Naive thymus-derived CD4-positive, alpha-beta T cell (primary cell): ENCODE measurements at regions of chr10 and their contacts with region 1.

Region 1: DNA sequence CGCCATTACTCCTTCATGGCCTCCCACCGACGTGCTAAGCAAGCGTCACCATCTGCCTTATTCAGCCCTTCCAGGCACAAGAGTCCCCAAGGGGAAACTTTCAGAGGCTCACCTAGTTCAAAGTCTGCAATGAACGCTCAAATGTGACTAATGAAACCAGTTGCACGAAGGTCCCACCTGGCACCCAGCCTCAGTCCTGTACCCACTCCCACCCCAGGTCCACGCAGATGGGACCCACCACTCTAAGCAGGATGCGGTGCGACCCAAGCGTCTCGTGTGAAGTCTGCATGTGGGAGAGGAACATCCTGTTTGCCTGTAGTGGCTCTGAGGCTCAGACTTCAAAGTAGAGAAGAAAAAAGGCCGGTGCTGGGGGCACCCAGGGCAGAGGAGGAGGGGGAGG is 40.3 kb downstream of the RGS10 start:
- DNase-seq: peak; percentile 50 to 93 (median 91)
- ATAC-seq: peak; percentile 91
- H3K4me3 ChIP-seq: peak overlapping the region; percentile 46
- H3K4me3 Mint-ChIP-seq: peak overlapping the region; percentile 70 to 85 (median 82)
- H3K27ac ChIP-seq: peak overlapping the region; percentile 98
- H3K27ac Mint-ChIP-seq: peak overlapping the region; percentile 95 to 100 (median 99)
- H3K4me1 ChIP-seq: peaks cover 39 to 88% of the 10 kb centered on the region in 2 donors
- H3K4me1 Mint-ChIP-seq: peaks cover 56 to 98% (median 92%) of the 10 kb centered on the region in 7 donors
- H3K27me3 ChIP-seq: no peaks in the 10 kb centered on the region
- H3K27me3 Mint-ChIP-seq: no peaks in the 10 kb centered on the region

Region 2: DNA sequence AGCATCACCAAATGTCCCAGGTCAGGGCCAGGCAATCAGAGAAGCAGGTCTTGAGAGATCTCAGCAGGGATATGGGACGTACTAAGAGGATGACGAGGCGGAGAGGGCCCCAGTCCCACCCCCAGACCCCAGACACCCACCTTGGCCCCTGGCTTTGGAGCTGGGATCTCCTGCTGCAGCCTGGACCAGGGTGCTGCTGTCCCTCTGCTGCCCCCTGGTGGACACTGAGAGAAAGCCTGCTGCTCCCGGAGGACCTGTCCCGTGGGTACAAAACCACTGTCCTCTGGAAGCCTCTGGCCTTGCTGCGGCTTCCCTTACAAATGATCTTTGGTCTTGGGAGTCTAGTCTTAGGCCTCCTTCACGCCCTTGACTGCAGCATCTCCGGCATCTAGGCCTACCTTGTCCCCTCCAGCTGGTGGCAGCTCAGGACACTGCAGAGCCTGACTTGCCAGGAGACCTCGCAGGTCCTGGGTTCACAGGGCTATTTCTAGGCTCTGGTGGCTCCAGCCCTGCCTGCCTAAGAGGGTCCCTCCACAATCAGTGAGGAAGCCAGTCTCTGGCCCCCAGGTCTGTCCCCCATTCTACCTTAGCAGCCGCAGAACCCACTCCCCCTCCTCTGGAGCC is 56.8 kb before region 1 on chr10:
- CTCF ChIA-PET with region 1: interaction called, 8 read pairs
- POLR2A ChIA-PET with region 1: no interaction called
- intact Hi-C with region 1: loop called in 1 of 2 experiments (anchors 1 kb)
- DNase-seq: peak; percentile 64 to 89 (median 76)
- ATAC-seq: peak; percentile 85
- H3K4me3 ChIP-seq: no peak overlapping the region
- H3K4me3 Mint-ChIP-seq: peak overlapping the region in 1 of 10 donors; percentile 60
- H3K27ac ChIP-seq: no peak overlapping the region
- H3K27ac Mint-ChIP-seq: peak overlapping the region in 8 of 9 donors; percentile 6 to 81 (median 52)
- H3K4me1 ChIP-seq: no peaks in the 10 kb centered on the region
- H3K4me1 Mint-ChIP-seq: peaks cover 12 to 23% (median 17%) of the 10 kb centered on the region in 7 donors
- H3K27me3 ChIP-seq: no peaks in the 10 kb centered on the region
- H3K27me3 Mint-ChIP-seq: no peaks in the 10 kb centered on the region

Region 3: GRCh38 chr10:119478111-119478802 is 24.0 kb before region 1 on chr10:
- CTCF ChIA-PET with region 1: no interaction called
- POLR2A ChIA-PET with region 1: interaction called, 5 read pairs
- intact Hi-C with region 1: loop called in 1 of 2 experiments (anchors 1 kb)
- DNase-seq: peak in 2 of 9 donors; percentile 5 to 35
- ATAC-seq: peak; percentile 64
- H3K4me3 ChIP-seq: no peak overlapping the region
- H3K4me3 Mint-ChIP-seq: peak overlapping the region; percentile 66 to 81 (median 71)
- H3K27ac ChIP-seq: no peak overlapping the region
- H3K27ac Mint-ChIP-seq: peak overlapping the region; percentile 23 to 81 (median 71)
- H3K4me1 ChIP-seq: peaks cover 20 to 26% of the 10 kb centered on the region in 2 donors
- H3K4me1 Mint-ChIP-seq: peaks cover 25 to 44% (median 35%) of the 10 kb centered on the region in 7 donors
- H3K27me3 ChIP-seq: no peaks in the 10 kb centered on the region
- H3K27me3 Mint-ChIP-seq: peaks cover 0 to 6% (median 0%) of the 10 kb centered on the region in 5 donors

Region 4: GRCh38 chr10:119489991-119490326 is 12.2 kb before region 1 on chr10:
- CTCF ChIA-PET with region 1: interaction called, 9 read pairs
- POLR2A ChIA-PET with region 1: interaction called, 15 read pairs
- intact Hi-C with region 1: loop called in 1 of 2 experiments (anchors 1 kb)
- DNase-seq: no peak
- ATAC-seq: no peak
- H3K4me3 ChIP-seq: peak overlapping the region; percentile 55
- H3K4me3 Mint-ChIP-seq: peak overlapping the region; percentile 53 to 92 (median 84)
- H3K27ac ChIP-seq: peak overlapping the region; percentile 83
- H3K27ac Mint-ChIP-seq: peak overlapping the region; percentile 80 to 98 (median 92)
- H3K4me1 ChIP-seq: peaks cover 24 to 36% of the 10 kb centered on the region in 2 donors
- H3K4me1 Mint-ChIP-seq: peaks cover 19 to 66% (median 59%) of the 10 kb centered on the region in 7 donors
- H3K27me3 ChIP-seq: no peaks in the 10 kb centered on the region
- H3K27me3 Mint-ChIP-seq: no peaks in the 10 kb centered on the region

Region 5: GRCh38 chr10:119536508-119537025 is 34.4 kb after region 1 on chr10:
- CTCF ChIA-PET with region 1: interaction called, 28 read pairs
- POLR2A ChIA-PET with region 1: interaction called, 169 read pairs
- intact Hi-C with region 1: loop called in 1 of 2 experiments (anchors 1 kb)
- DNase-seq: no peak
- ATAC-seq: no peak
- H3K4me3 ChIP-seq: peak overlapping the region; percentile 16
- H3K4me3 Mint-ChIP-seq: peak overlapping the region; percentile 58 to 96 (median 90)
- H3K27ac ChIP-seq: peak overlapping the region; percentile 89
- H3K27ac Mint-ChIP-seq: peak overlapping the region; percentile 86 to 98 (median 91)
- H3K4me1 ChIP-seq: peaks cover 26 to 62% of the 10 kb centered on the region in 2 donors
- H3K4me1 Mint-ChIP-seq: peaks cover 61 to 88% (median 80%) of the 10 kb centered on the region in 7 donors
- H3K27me3 ChIP-seq: no peaks in the 10 kb centered on the region
- H3K27me3 Mint-ChIP-seq: no peaks in the 10 kb centered on the region

Region 6: DNA sequence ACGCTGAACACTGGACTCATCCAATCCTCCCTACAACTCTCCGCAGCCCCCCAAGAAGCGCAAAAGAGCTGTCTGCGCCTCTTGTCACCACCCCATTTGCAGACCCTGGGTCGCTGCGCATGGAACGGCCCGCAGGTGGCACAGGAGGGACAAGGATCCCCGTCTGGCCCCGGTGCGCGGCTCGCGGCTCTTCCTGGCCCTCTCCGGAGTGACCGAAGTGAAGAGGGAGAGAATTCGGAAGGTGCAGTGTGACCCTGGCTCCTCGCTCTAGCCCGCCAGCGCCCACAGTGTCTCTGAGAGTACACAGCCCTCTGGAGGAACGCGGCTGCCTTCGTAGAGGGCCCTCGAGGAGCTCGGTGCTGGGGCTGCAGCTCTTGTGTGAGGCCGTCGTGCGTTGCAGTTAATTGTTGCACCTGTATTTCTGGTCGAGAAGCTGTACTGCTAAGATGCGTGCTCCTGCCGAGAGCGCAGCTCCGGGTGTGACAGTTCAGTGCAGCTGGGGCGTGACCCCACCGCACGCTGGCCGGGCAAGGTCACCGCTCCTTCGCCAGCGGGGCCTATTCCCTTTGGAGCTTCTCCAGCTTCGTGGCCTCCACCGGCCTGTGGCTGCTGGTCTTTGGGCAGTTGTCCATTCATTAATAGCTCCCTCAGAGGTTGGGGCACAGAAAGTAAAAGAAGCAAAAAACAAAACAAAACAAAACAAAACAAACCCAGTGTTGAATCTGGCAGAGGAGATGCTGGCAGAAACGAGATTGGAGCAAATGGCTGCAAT is 509.3 kb after region 1 on chr10:
- CTCF ChIA-PET with region 1: no interaction called
- POLR2A ChIA-PET with region 1: no interaction called
- intact Hi-C with region 1: no loop called
- DNase-seq: no peak
- ATAC-seq: no peak
- H3K4me3 ChIP-seq: no peak overlapping the region
- H3K4me3 Mint-ChIP-seq: no peak overlapping the region
- H3K27ac ChIP-seq: no peak overlapping the region
- H3K27ac Mint-ChIP-seq: no peak overlapping the region
- H3K4me1 ChIP-seq: no peaks in the 10 kb centered on the region
- H3K4me1 Mint-ChIP-seq: no peaks in the 10 kb centered on the region
- H3K27me3 ChIP-seq: peaks cover 0 to 7% of the 10 kb centered on the region in 2 donors
- H3K27me3 Mint-ChIP-seq: peaks cover 16 to 62% (median 51%) of the 10 kb centered on the region in 5 donors